Left lung (tissue), 14 donors: ENCODE measurements at regions of chr11 and their contacts with region 1.

Region 1: DNA sequence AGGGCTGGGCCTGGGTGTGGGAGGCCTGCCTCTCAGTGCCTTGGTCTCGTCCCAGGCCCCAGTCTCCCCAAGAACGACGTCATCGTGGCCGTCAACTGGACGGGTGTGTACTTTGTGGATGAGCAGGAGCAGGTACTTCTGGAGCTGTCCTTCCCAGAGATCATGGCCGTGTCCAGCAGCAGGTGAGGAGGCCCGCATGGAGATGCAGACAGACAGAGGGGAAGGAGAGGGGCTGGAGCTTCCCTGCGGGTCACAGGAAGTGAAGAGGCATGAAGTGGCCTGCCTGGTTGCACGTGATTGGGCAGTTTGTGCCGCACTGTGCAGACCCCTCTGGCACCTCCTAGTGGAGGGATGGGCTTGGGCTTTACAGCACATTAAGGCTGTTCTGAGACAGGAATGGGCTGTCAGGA is 70.4 kb downstream of the MYO7A start:
- DNase-seq: peak in 1 of 4 donors; percentile 28
- ATAC-seq: no peak
- H3K4me3 ChIP-seq: no peak overlapping the region
- H3K27ac ChIP-seq: no peak overlapping the region
- H3K4me1 ChIP-seq: no peaks in the 10 kb centered on the region
- H3K27me3 ChIP-seq: no peaks in the 10 kb centered on the region
- CTCF ChIP-seq: no peak

Region 2: GRCh38 chr11:77082838-77083562 is 115.4 kb before region 1 on chr11:
- intact Hi-C with region 1: no loop called
- DNase-seq: peak in 2 of 4 donors; percentile 58
- ATAC-seq: peak; percentile 67
- H3K4me3 ChIP-seq: no peak overlapping the region
- H3K27ac ChIP-seq: peak overlapping the region in 1 of 2 donors; percentile 20
- H3K4me1 ChIP-seq: peaks cover 5 to 13% of the 10 kb centered on the region in 2 donors
- H3K27me3 ChIP-seq: no peaks in the 10 kb centered on the region
- CTCF ChIP-seq: no peak

Region 3: GRCh38 chr11:77244243-77245027 is 46.0 kb after region 1 on chr11:
- intact Hi-C with region 1: no loop called
- DNase-seq: no peak
- ATAC-seq: peak; percentile 70
- H3K4me3 ChIP-seq: no peak overlapping the region
- H3K27ac ChIP-seq: no peak overlapping the region
- H3K4me1 ChIP-seq: no peaks in the 10 kb centered on the region
- H3K27me3 ChIP-seq: no peaks in the 10 kb centered on the region
- CTCF ChIP-seq: no peak

Region 4: GRCh38 chr11:77542296-77542695 is 343.9 kb after region 1 on chr11:
- intact Hi-C with region 1: loop called in 1 of 2 experiments (anchors 5 kb)
- DNase-seq: no peak
- ATAC-seq: no peak
- H3K4me3 ChIP-seq: no peak overlapping the region
- H3K27ac ChIP-seq: no peak overlapping the region
- H3K4me1 ChIP-seq: no peaks in the 10 kb centered on the region
- H3K27me3 ChIP-seq: no peaks in the 10 kb centered on the region
- CTCF ChIP-seq: no peak